ENCODE measurements at regions of chr11 and their contacts with region 1.

Region 1: GRCh38 chr11:59429924-59430516 is 3.8 kb upstream of the OR5A2 start:
- DNase-seq: peak in 5 of 9 experiments; percentile 2 to 73 (median 31)
- ATAC-seq: peak; percentile 52
- H3K4me3 ChIP-seq: no peak overlapping the region
- H3K4me3 Mint-ChIP-seq: no peak overlapping the region
- H3K27ac ChIP-seq: no peak overlapping the region
- H3K27ac Mint-ChIP-seq: no peak overlapping the region
- H3K4me1 ChIP-seq: no peaks in the 10 kb centered on the region
- H3K4me1 Mint-ChIP-seq: no peaks in the 10 kb centered on the region
- H3K27me3 ChIP-seq: no peaks in the 10 kb centered on the region
- H3K27me3 Mint-ChIP-seq: peaks cover 10% of the 10 kb centered on the region
- CTCF ChIP-seq: peak; percentile 86

Region 2: DNA sequence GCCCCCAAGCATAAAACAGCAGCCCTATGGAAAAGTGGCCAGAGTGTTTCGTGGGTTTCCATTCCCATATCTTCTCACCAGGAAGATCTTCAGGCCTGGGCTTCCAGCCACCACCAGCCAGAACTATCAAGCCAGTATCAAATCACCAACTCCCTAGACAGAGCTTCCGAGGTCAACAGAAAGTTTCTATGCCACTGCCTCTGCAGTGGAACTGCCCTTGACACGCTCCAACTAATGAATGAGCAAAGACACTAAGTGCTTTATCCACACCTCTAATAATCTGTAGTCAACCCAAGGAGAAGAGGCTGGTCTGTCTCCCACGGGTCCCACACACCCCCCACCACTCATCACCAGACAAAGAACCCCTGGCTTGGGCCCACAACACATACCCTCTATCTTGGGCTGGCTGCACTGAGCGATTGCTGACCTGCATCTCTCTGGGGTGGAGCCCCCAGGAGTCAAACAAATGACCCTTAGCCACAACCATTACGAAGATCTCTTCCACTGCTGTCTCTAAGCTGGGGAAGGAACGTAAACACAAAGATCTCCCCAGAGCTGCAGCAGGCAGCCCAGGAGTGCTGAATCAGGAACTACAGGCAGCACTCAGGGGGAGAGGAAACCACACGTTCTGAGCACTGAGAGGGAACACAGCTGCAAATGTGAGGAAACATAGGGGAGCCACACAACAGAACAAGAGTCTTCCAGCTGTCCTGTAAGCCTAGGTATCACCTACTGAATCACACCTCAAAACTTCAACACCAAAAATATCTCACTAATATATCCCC is 61.6 kb before region 1 on chr11:
- CTCF ChIA-PET with region 1: no interaction called
- POLR2A ChIA-PET with region 1: no interaction called
- intact Hi-C with region 1: no loop called
- DNase-seq: no peak
- ATAC-seq: no peak
- H3K4me3 ChIP-seq: no peak overlapping the region
- H3K4me3 Mint-ChIP-seq: no peak overlapping the region
- H3K27ac ChIP-seq: no peak overlapping the region
- H3K27ac Mint-ChIP-seq: no peak overlapping the region
- H3K4me1 ChIP-seq: no peaks in the 10 kb centered on the region
- H3K4me1 Mint-ChIP-seq: no peaks in the 10 kb centered on the region
- H3K27me3 ChIP-seq: no peaks in the 10 kb centered on the region
- H3K27me3 Mint-ChIP-seq: peaks cover 13% of the 10 kb centered on the region
- CTCF ChIP-seq: no peak

Region 3: DNA sequence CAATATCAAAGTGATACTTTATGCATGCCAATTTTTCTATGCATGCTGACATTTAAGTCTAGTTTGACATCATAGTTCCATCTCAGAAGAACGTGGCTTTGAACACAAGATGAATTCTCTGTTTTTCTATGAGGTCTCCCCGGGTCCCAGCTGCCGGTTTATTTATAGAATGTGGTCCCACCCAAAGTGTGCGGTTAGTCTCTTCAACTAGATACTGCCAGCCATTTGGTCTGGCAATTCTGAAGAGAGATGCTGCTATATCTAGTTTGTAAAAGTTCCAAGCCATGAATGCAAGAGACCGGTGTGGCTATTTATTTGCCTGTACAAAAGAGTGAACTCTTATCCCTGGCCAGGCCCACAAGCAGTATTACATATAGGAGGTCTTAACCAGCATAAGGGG is 13.0 kb before region 1 on chr11:
- CTCF ChIA-PET with region 1: interaction called, 17 read pairs
- POLR2A ChIA-PET with region 1: no interaction called
- intact Hi-C with region 1: no loop called
- DNase-seq: peak in 2 of 9 experiments; percentile 21 to 26
- ATAC-seq: peak; percentile 29
- H3K4me3 ChIP-seq: no peak overlapping the region
- H3K4me3 Mint-ChIP-seq: no peak overlapping the region
- H3K27ac ChIP-seq: no peak overlapping the region
- H3K27ac Mint-ChIP-seq: no peak overlapping the region
- H3K4me1 ChIP-seq: peaks cover 14% of the 10 kb centered on the region
- H3K4me1 Mint-ChIP-seq: peaks cover 20% of the 10 kb centered on the region
- H3K27me3 ChIP-seq: peaks cover 0 to 2% of the 10 kb centered on the region in 2 experiments
- H3K27me3 Mint-ChIP-seq: peaks cover 8% of the 10 kb centered on the region
- CTCF ChIP-seq: no peak

Measured in CD8-positive, alpha-beta T cell (primary cell).